BJ (cell line): ENCODE measurements at regions of chr3 and their contacts with region 1.

Region 1: DNA sequence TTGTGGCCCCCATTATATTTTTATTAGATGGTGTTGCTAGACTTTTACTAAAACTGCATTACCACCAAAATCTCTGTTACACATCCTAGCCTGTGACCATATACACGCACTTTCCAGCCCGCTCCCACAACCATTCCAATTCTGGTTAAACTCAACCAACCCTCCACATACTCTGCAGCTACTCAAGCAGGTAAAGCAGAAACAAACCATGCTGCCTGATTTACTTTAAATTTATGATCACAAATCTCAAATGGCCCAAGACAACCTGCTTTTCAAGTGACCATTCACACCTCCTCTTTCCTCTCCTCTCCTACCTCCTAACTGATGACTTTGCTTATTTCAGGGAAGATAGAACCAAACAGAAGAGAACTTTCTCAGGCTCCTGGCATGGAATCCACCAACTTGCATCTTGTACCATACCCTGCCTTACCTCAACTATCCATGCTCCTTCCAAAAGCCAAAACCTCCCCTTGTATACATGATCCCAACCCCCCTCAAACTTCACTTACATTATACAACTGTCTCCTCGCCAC is 18.5 kb downstream of the ULK4 start:
- DNase-seq: no peak
- H3K4me3 ChIP-seq: no peak overlapping the region
- H3K27me3 ChIP-seq: no peaks in the 10 kb centered on the region
- CTCF ChIP-seq: no peak

Region 2: GRCh38 chr3:41900265-41900664 is 43.1 kb before region 1 on chr3:
- CTCF ChIA-PET with region 1: no interaction called
- POLR2A ChIA-PET with region 1: no interaction called
- DNase-seq: no peak
- H3K4me3 ChIP-seq: no peak overlapping the region
- H3K27me3 ChIP-seq: no peaks in the 10 kb centered on the region
- CTCF ChIP-seq: no peak

Region 3: GRCh38 chr3:41933146-41933676 is 10.2 kb before region 1 on chr3:
- CTCF ChIA-PET with region 1: no interaction called
- POLR2A ChIA-PET with region 1: no interaction called
- DNase-seq: peak; percentile 56
- H3K4me3 ChIP-seq: no peak overlapping the region
- H3K27me3 ChIP-seq: no peaks in the 10 kb centered on the region
- CTCF ChIP-seq: no peak

Region 4: DNA sequence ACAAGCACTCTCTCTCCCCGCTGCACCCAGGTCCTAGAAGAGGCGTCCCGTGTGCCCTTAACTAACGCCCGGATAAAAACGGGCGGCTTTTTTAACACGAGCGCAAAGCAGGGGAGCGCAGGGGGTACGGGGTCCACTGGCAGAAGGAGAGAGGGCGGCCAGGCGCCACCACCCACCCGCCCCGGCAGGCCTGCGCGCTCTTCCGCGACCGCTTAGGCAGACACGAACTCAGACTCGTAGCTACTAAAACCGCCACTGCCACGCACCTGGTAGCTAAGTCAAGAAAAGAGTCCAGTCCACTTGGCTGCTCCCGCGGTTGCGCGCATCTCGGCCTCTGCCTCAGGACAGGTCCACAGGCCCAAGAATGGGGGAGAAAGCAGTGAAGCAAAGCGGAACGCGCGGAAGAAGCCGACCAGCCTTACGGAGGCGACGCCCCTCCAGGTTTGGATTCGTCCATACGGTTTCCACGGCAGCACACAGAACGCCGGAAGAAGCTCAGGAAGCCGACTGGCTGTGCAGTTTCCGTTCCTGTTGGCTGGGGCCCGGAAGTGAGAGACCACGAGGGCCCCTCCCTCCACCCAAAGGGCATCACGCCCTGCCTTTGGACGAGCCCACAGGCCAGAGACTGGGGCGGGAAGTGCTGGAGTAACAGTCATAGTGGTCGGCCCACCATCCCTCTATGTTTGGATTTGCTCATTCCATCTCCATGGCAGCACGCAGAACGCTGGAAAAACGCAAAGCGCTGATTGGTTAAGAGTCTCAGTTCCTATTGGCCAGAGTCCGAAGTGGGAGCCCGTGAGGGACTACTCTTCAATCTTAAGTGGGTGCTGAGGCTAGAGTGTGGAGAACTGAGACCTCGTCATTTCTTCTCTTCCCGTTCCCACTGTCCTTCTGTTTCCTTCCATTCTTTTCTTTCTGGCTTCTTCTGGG is 18.6 kb after region 1 on chr3 and contains the start of gene ULK4:
- CTCF ChIA-PET with region 1: no interaction called
- POLR2A ChIA-PET with region 1: interaction called, 13 read pairs
- DNase-seq: peak; percentile 100
- H3K4me3 ChIP-seq: peak within 1 kb of the TSS; percentile 72
- H3K27me3 ChIP-seq: no peaks in the 10 kb centered on the region
- CTCF ChIP-seq: no peak
- polyA plus RNA-seq, gene ULK4: 1.6 and 2.7 TPM in 2 replicates

Region 5: GRCh38 chr3:42117175-42118008 is 174.0 kb after region 1 on chr3:
- CTCF ChIA-PET with region 1: no interaction called
- POLR2A ChIA-PET with region 1: no interaction called
- DNase-seq: peak; percentile 28
- H3K4me3 ChIP-seq: no peak overlapping the region
- H3K27me3 ChIP-seq: no peaks in the 10 kb centered on the region
- CTCF ChIP-seq: peak; percentile 67